Esophagus muscularis mucosa (tissue), 4 donors: ENCODE measurements at regions of chr18 and their contacts with region 1.

Region 1: DNA sequence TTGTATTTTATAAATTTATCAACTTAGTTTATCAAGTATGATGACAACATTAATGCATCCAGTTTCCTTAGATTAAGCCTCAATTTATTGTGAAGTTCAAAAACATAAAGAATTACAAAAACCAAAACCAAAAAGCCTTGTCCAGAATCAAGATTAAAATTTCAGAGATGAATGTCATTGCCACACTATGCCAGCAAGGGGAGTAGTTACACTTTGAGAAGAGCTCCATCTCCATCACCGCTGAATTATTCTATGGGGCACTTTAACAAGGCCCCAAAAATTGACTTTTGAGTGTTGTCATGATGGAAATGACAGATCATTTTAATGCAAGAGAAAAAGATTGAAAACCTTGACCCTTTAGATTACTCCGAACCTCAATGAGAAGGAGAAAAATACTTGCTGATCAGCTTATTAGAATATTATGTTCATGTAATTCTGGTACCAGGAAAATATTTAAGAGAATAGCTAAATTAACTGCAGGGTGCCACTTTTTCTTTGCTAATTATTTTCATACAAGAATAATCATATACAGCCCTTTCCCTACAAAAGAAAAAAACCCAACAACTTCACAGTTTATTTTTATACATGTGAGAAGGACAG is 152.5 kb upstream of the AQP4 start:
- DNase-seq: no peak
- H3K4me3 ChIP-seq: no peak overlapping the region
- H3K27ac ChIP-seq: no peak overlapping the region
- H3K4me1 ChIP-seq: no peaks in the 10 kb centered on the region
- H3K27me3 ChIP-seq: no peaks in the 10 kb centered on the region
- CTCF ChIP-seq: peak; percentile 50 to 65 (median 54)
- EP300 ChIP-seq: no peak
- POLR2A ChIP-seq: no peak

Region 2: GRCh38 chr18:27298214-27298804 is 280.3 kb after region 1 on chr18:
- intact Hi-C with region 1: loop called (anchors 5 kb)
- DNase-seq: no peak
- H3K4me3 ChIP-seq: no peak overlapping the region
- H3K27ac ChIP-seq: no peak overlapping the region
- H3K4me1 ChIP-seq: no peaks in the 10 kb centered on the region
- H3K27me3 ChIP-seq: no peaks in the 10 kb centered on the region
- CTCF ChIP-seq: peak in 2 of 3 experiments; percentile 3 to 33
- EP300 ChIP-seq: no peak
- POLR2A ChIP-seq: no peak

Region 3: GRCh38 chr18:27599202-27599829 is 581.3 kb after region 1 on chr18:
- intact Hi-C with region 1: loop called (anchors 5 kb)
- DNase-seq: no peak
- H3K4me3 ChIP-seq: no peak overlapping the region
- H3K27ac ChIP-seq: no peak overlapping the region
- H3K4me1 ChIP-seq: no peaks in the 10 kb centered on the region
- H3K27me3 ChIP-seq: no peaks in the 10 kb centered on the region
- CTCF ChIP-seq: peak; percentile 74 to 85 (median 83)
- EP300 ChIP-seq: no peak
- POLR2A ChIP-seq: no peak